Transverse colon (tissue), 4 donors: ENCODE measurements at regions of chr6 and their contacts with region 1.

Region 1: GRCh38 chr6:10800829-10801535 is 37.4 kb downstream of the MAK start:
- DNase-seq: peak; percentile 51
- H3K4me3 ChIP-seq: no peak overlapping the region
- H3K27ac ChIP-seq: no peak overlapping the region
- H3K4me1 ChIP-seq: no peaks in the 10 kb centered on the region
- H3K27me3 ChIP-seq: no peaks in the 10 kb centered on the region
- CTCF ChIP-seq: peak; percentile 86 to 99 (median 97)
- EP300 ChIP-seq: no peak
- POLR2A ChIP-seq: no peak

Region 2: GRCh38 chr6:10505529-10505928 is 295.5 kb before region 1 on chr6:
- in situ Hi-C with region 1: loop called in 1 of 4 experiments (anchors 10 kb)
- intact Hi-C with region 1: no loop called
- DNase-seq: no peak
- H3K4me3 ChIP-seq: no peak overlapping the region
- H3K27ac ChIP-seq: no peak overlapping the region
- H3K4me1 ChIP-seq: no peaks in the 10 kb centered on the region
- H3K27me3 ChIP-seq: peaks cover 3% of the 10 kb centered on the region
- CTCF ChIP-seq: no peak
- EP300 ChIP-seq: no peak
- POLR2A ChIP-seq: no peak

Region 3: GRCh38 chr6:10979603-10980002 is 178.6 kb after region 1 on chr6:
- in situ Hi-C with region 1: no loop called
- intact Hi-C with region 1: no loop called
- DNase-seq: no peak
- H3K4me3 ChIP-seq: no peak overlapping the region
- H3K27ac ChIP-seq: no peak overlapping the region
- H3K4me1 ChIP-seq: no peaks in the 10 kb centered on the region
- H3K27me3 ChIP-seq: no peaks in the 10 kb centered on the region
- CTCF ChIP-seq: no peak
- EP300 ChIP-seq: no peak
- POLR2A ChIP-seq: no peak